Natural killer cell (primary cell): ENCODE measurements at regions of chr16 and their contacts with region 1.

Region 1: GRCh38 chr16:4538350-4539235 is at the start of gene CDIP1:
- DNase-seq: peak; percentile 92 to 97
- ATAC-seq: peak; percentile 87 to 93 (median 88)
- H3K4me3 ChIP-seq: peak within 1 kb of the TSS; percentile 60
- H3K4me3 Mint-ChIP-seq: peak within 1 kb of the TSS; percentile 84
- H3K27ac ChIP-seq: peak within 1 kb of the TSS; percentile 91
- H3K27ac Mint-ChIP-seq: peak within 1 kb of the TSS; percentile 85 to 88
- H3K4me1 ChIP-seq: peaks cover 43% of the 10 kb centered on the region
- H3K4me1 Mint-ChIP-seq: peaks cover 36 to 45% of the 10 kb centered on the region in 2 donors
- H3K27me3 ChIP-seq: no peaks in the 10 kb centered on the region
- H3K27me3 Mint-ChIP-seq: no peaks in the 10 kb centered on the region
- CTCF ChIP-seq: no peak
- total RNA-seq, gene CDIP1: 35.2 to 49.2 (median 37.9) TPM

Region 2: GRCh38 chr16:4371357-4372000 is 167.1 kb before region 1 on chr16 and contains the start of gene VASN:
- intact Hi-C with region 1: no loop called
- DNase-seq: peak; percentile 79 to 85
- ATAC-seq: peak; percentile 84 to 90 (median 88)
- H3K4me3 ChIP-seq: peak within 1 kb of the TSS; percentile 16
- H3K4me3 Mint-ChIP-seq: peak within 1 kb of the TSS; percentile 75
- H3K27ac ChIP-seq: no peak within 1 kb of the TSS
- H3K27ac Mint-ChIP-seq: peak within 1 kb of the TSS in 1 of 2 donors; percentile 60
- H3K4me1 ChIP-seq: peaks cover 27% of the 10 kb centered on the region
- H3K4me1 Mint-ChIP-seq: peaks cover 0 to 20% of the 10 kb centered on the region in 2 donors
- H3K27me3 ChIP-seq: no peaks in the 10 kb centered on the region
- H3K27me3 Mint-ChIP-seq: no peaks in the 10 kb centered on the region
- CTCF ChIP-seq: no peak
- total RNA-seq, gene VASN: 0.35 to 0.93 (median 0.78) TPM

Region 3: GRCh38 chr16:4475880-4476788 is 62.5 kb before region 1 on chr16 and contains the start of gene HMOX2:
- intact Hi-C with region 1: loop called (anchors 5 kb)
- DNase-seq: peak; percentile 95 to 96
- ATAC-seq: peak; percentile 87 to 97 (median 91)
- H3K4me3 ChIP-seq: peak within 1 kb of the TSS; percentile 96
- H3K4me3 Mint-ChIP-seq: peak within 1 kb of the TSS; percentile 87
- H3K27ac ChIP-seq: peak within 1 kb of the TSS; percentile 71
- H3K27ac Mint-ChIP-seq: peak within 1 kb of the TSS; percentile 85
- H3K4me1 ChIP-seq: peaks cover 47% of the 10 kb centered on the region
- H3K4me1 Mint-ChIP-seq: peaks cover 23 to 46% of the 10 kb centered on the region in 2 donors
- H3K27me3 ChIP-seq: no peaks in the 10 kb centered on the region
- H3K27me3 Mint-ChIP-seq: no peaks in the 10 kb centered on the region
- CTCF ChIP-seq: peak; percentile 30
- total RNA-seq, gene HMOX2: 66.0 to 104 (median 77.3) TPM

Region 4: DNA sequence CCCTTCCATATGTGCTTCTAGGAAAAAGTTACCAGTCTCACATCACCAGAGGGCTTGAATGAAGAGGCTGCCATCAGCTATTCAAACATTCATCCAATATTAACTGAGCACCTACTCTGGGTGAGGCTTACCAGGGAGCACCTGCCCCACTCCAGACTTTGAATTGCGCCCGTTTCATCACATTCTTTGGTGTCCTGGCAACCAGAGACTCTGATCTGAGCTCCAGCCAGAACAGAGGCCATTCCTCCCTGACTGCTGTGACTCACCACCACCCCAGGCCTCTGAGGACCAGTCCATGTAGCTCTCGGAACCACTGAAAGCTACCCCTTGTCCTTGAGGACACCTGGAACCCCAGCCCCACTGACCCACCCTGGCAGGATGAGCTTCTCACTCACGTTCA is 17.5 kb after region 1 on chr16 and contains the start of gene C16orf96:
- intact Hi-C with region 1: no loop called
- DNase-seq: no peak
- ATAC-seq: no peak
- H3K4me3 ChIP-seq: no peak within 1 kb of the TSS
- H3K4me3 Mint-ChIP-seq: no peak within 1 kb of the TSS
- H3K27ac ChIP-seq: no peak within 1 kb of the TSS
- H3K27ac Mint-ChIP-seq: no peak within 1 kb of the TSS
- H3K4me1 ChIP-seq: no peaks in the 10 kb centered on the region
- H3K4me1 Mint-ChIP-seq: no peaks in the 10 kb centered on the region
- H3K27me3 ChIP-seq: no peaks in the 10 kb centered on the region
- H3K27me3 Mint-ChIP-seq: peaks cover 0 to 2% of the 10 kb centered on the region in 2 donors
- CTCF ChIP-seq: no peak
- total RNA-seq, gene C16orf96: 0.35 to 0.61 (median 0.43) TPM